Psoas muscle (tissue), 8 donors: ENCODE measurements at regions of chr12 and their contacts with region 1.

Region 1: DNA sequence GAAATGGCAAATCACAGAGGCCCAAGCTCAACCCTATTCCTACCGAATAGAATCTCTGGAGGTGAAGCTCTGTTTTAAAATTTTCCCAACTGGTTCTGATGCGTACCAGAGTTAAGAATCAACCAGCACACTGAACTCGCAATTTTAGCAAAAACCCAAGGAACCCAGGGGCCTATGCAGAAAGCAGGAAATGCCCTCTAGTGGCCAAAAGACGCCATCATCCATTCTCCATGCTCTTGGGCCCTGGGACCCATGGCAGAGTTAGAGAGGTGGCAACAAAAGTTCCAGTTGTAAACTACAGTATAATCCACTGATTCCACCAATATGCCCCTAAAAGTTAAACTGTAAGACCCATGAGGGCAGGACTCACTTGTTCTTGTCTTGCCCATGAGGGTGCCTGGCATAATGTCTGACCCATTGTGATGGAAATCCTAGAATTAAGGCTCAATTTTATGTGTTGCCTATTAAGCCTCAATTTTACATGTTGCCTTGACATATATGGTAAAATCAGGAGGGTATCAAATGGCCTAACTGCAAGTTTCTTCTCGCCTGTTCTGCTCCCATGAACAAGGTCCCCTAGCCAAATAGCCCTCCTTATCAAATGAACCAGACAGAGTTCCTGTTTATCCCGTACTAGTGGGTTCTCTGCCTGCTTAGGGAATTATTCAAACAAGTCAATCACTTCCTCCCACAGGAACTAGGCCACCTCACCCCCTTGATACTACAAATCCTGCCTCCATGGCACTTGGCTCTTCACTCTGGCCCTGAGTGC is 137.5 kb upstream of the CPM start:
- DNase-seq: no peak
- ATAC-seq: peak; percentile 42 to 74 (median 61)
- H3K4me3 ChIP-seq: no peak overlapping the region
- H3K27ac ChIP-seq: no peak overlapping the region
- H3K4me1 ChIP-seq: no peaks in the 10 kb centered on the region
- H3K27me3 ChIP-seq: no peaks in the 10 kb centered on the region
- CTCF ChIP-seq: peak; percentile 78

Region 2: DNA sequence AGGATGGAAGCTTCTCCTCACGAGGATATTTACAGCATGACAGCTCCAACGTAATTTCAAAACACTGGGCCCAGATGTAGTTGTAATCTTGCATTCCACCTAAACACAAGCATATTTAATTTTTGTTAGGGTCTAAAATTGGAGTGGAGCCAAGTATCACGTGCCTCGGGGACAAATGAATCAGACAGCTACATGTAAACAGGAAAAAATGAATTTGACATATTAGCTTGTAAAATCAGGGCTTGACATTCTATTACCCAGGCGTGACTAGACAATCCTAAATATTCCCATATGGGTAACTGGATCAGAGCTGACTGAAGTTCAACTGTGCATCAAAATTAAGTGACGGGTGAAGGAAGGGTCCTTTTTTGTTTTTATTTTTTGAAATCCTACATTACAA is 203.6 kb before region 1 on chr12:
- intact Hi-C with region 1: loop called (anchors 2 to 10 kb)
- DNase-seq: no peak
- ATAC-seq: no peak
- H3K4me3 ChIP-seq: no peak overlapping the region
- H3K27ac ChIP-seq: no peak overlapping the region
- H3K4me1 ChIP-seq: no peaks in the 10 kb centered on the region
- H3K27me3 ChIP-seq: peaks cover 0 to 5% (median 0%) of the 10 kb centered on the region in 3 donors
- CTCF ChIP-seq: no peak